ENCODE measurements at regions of chr7 and their contacts with region 1.

Region 1: GRCh38 chr7:87564289-87564963 is 36.3 kb downstream of the ABCB1 start:
- DNase-seq: peak; percentile 20
- ATAC-seq: peak; percentile 87
- H3K4me3 ChIP-seq: no peak overlapping the region
- H3K27ac ChIP-seq: peak overlapping the region; percentile 23
- H3K4me1 ChIP-seq: peaks cover 23% of the 10 kb centered on the region
- H3K27me3 ChIP-seq: no peaks in the 10 kb centered on the region
- CTCF ChIP-seq: peak; percentile 79
- EP300 ChIP-seq: no peak
- POLR2A ChIP-seq: no peak
- RAD21 ChIP-seq: no peak

Region 2: DNA sequence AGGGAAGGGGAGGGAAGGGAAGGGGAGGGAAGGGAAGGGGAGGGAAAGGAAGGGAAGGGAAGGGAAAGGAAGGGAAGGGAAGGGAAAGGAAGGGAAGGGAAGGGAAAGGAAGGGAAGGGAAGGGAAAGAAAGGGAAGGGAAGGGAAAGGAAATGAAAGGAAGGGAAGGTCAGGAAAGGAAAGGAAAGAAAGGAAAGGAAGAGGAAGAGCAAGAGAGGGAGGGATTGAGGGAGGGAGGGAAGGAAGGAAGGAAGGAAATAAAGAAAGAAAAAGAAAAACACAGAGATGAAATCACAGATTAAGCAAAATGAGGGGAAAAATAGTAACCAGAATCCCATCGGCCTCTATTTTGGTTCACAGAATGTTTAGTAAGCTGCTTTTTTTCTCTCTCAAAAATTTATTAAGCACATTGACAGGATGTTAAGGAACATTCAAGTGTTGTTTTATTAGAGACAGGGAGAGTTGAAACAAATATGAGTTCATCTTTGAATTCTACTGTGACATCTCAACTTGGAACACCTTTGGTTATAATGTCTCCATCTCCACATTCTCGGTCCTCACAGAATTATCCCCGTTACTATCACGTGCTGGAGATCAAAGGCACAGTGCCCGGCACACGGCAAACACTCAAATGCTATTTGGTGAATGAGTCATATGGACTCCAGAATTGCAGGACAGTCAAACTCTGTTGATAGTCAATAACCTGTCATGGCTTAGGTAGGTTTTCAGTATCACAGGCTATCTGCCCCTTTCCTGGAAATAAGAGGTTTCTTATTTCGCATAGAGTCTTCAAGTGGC is 16.1 kb before region 1 on chr7:
- CTCF ChIA-PET with region 1: no interaction called
- POLR2A ChIA-PET with region 1: no interaction called
- in situ Hi-C with region 1: no loop called
- intact Hi-C with region 1: loop called (anchors 2 kb)
- DNase-seq: peak; percentile 90
- ATAC-seq: peak; percentile 95
- H3K4me3 ChIP-seq: no peak overlapping the region
- H3K27ac ChIP-seq: no peak overlapping the region
- H3K4me1 ChIP-seq: peaks cover 19% of the 10 kb centered on the region
- H3K27me3 ChIP-seq: no peaks in the 10 kb centered on the region
- CTCF ChIP-seq: no peak
- EP300 ChIP-seq: peak; percentile 40 to 82; a peak in 2 of 4 replicates
- POLR2A ChIP-seq: no peak
- RAD21 ChIP-seq: no peak

Region 3: DNA sequence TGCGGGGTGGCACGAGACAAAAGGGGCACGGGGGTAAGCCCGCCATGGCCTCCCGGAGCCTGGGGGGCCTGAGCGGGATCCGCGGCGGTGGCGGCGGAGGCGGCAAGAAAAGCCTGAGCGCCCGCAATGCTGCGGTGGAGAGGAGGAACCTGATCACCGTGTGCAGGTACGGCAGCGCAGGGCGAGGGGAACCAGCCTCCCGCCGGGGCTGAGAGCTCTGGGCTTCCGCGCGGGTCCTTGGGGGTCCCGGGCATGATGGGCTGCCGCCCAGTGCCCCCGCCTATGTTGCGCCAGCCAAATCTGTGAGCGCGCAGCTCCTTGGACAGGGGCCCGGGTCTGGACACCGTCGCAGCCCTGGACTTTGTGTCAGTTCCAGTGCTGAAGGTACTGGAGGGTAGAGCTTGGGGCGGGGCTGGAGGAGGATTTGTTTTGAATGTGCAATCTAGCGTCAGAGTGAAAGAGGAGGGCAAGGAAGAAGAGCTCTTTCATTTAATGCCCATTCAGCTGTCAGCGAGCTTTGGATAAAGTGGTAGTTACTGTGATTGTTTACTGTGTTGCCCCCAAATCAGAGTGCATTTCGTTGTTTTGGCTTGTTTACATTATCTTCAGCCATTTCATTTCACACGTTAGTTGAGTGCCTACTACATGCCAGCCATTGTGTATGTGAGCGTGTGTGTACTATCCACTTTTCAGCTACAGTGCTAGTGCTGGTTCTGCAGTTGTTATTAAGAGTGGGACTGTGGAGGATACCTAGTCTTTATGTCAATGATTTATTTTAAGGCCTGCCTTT is 64.5 kb after region 1 on chr7:
- CTCF ChIA-PET with region 1: no interaction called
- POLR2A ChIA-PET with region 1: interaction called, 3 read pairs
- in situ Hi-C with region 1: no loop called
- intact Hi-C with region 1: loop called (anchors 10 kb)
- DNase-seq: peak; percentile 20
- ATAC-seq: peak; percentile 77
- H3K4me3 ChIP-seq: peak overlapping the region; percentile 64 to 84 (median 66)
- H3K27ac ChIP-seq: no peak overlapping the region
- H3K4me1 ChIP-seq: peaks cover 14% of the 10 kb centered on the region; the same call in 1 of the 2 replicates
- H3K27me3 ChIP-seq: peaks cover 0 to 6% of the 10 kb centered on the region in 2 experiments; a peak in 1 of 5 replicates
- CTCF ChIP-seq: no peak
- EP300 ChIP-seq: no peak
- POLR2A ChIP-seq: no peak
- RAD21 ChIP-seq: no peak